ENCODE measurements at regions of chr10 and their contacts with region 1.

Region 1: GRCh38 chr10:106401161-106401560 is 763.3 kb downstream of the SORCS1 start:
- DNase-seq: no peak

Region 2: GRCh38 chr10:106571192-106571946 is 170.2 kb after region 1 on chr10:
- intact Hi-C with region 1: loop called (anchors 2 kb)
- DNase-seq: peak in 1 of 10 donors; percentile 32

Measured in posterior cingulate gyrus (tissue), 11 donors.